Activated CD8-positive, alpha-beta T cell treated with anti-CD3 and anti-CD28 coated beads, Interleukin-2, amount 10 ng/mL, durations not matched to agents 7 days and 5 days (primary cell): ENCODE measurements at regions of chr3 and their contacts with region 1.

Region 1: GRCh38 chr3:40317061-40317855 is 7.8 kb downstream of the EIF1B start:
- DNase-seq: peak; percentile 63
- ATAC-seq: peak; percentile 82
- H3K4me3 Mint-ChIP-seq: no peak overlapping the region
- H3K27ac Mint-ChIP-seq: no peak overlapping the region
- H3K4me1 Mint-ChIP-seq: peaks cover 7% of the 10 kb centered on the region
- H3K27me3 Mint-ChIP-seq: no peaks in the 10 kb centered on the region

Region 2: GRCh38 chr3:40185029-40185695 is 132.1 kb before region 1 on chr3:
- CTCF ChIA-PET with region 1: interaction called, 127 read pairs
- POLR2A ChIA-PET with region 1: no interaction called
- DNase-seq: no peak
- ATAC-seq: no peak
- H3K4me3 Mint-ChIP-seq: no peak overlapping the region
- H3K27ac Mint-ChIP-seq: no peak overlapping the region
- H3K4me1 Mint-ChIP-seq: no peaks in the 10 kb centered on the region
- H3K27me3 Mint-ChIP-seq: no peaks in the 10 kb centered on the region

Region 3: DNA sequence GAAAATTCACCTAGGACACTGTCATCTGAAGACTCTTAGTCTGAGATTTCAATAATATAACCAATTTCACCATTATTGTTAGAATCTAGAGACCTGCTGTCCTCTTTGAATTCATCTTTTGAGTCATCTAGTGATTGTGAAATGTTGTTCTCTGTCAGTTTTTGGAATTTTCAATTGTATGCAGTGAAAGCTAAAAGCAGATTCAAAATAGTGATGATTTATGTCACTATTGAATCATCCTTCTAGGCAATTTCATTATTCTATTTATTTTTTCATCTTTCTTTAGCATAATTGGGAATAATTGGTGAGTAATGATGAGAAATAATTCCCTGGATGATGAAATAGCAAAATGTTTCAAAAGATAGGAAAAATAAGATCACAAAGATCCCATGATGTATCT is 109.5 kb before region 1 on chr3:
- CTCF ChIA-PET with region 1: interaction called, 13 read pairs
- POLR2A ChIA-PET with region 1: no interaction called
- DNase-seq: no peak
- ATAC-seq: no peak
- H3K4me3 Mint-ChIP-seq: no peak overlapping the region
- H3K27ac Mint-ChIP-seq: no peak overlapping the region
- H3K4me1 Mint-ChIP-seq: no peaks in the 10 kb centered on the region
- H3K27me3 Mint-ChIP-seq: peaks cover 3% of the 10 kb centered on the region

Region 4: GRCh38 chr3:40229386-40229785 is 87.9 kb before region 1 on chr3:
- CTCF ChIA-PET with region 1: no interaction called
- POLR2A ChIA-PET with region 1: no interaction called
- DNase-seq: no peak
- ATAC-seq: no peak
- H3K4me3 Mint-ChIP-seq: no peak overlapping the region
- H3K27ac Mint-ChIP-seq: no peak overlapping the region
- H3K4me1 Mint-ChIP-seq: no peaks in the 10 kb centered on the region
- H3K27me3 Mint-ChIP-seq: no peaks in the 10 kb centered on the region

Region 5: GRCh38 chr3:40294434-40294833 is 22.8 kb before region 1 on chr3:
- CTCF ChIA-PET with region 1: no interaction called
- POLR2A ChIA-PET with region 1: no interaction called
- DNase-seq: no peak
- ATAC-seq: no peak
- H3K4me3 Mint-ChIP-seq: no peak overlapping the region
- H3K27ac Mint-ChIP-seq: no peak overlapping the region
- H3K4me1 Mint-ChIP-seq: peaks cover 6% of the 10 kb centered on the region
- H3K27me3 Mint-ChIP-seq: no peaks in the 10 kb centered on the region